ENCODE measurements at regions of chr1 and their contacts with region 1.

Region 1: GRCh38 chr1:47527658-47528255 is 89.9 kb downstream of the FOXD2 start:
- DNase-seq: peak; percentile 30 to 56 (median 40)
- ATAC-seq: peak; percentile 89
- H3K4me3 ChIP-seq: no peak overlapping the region
- H3K27ac ChIP-seq: no peak overlapping the region
- H3K4me1 ChIP-seq: no peaks in the 10 kb centered on the region
- H3K27me3 ChIP-seq: peaks cover 5 to 8% of the 10 kb centered on the region in 2 experiments
- CTCF ChIP-seq: peak; percentile 56 to 67 (median 62)
- EP300 ChIP-seq: no peak
- POLR2A ChIP-seq: no peak
- RAD21 ChIP-seq: peak; percentile 17 to 69; a peak in 3 of 4 replicates

Region 2: GRCh38 chr1:47624531-47624930 is 96.8 kb after region 1 on chr1:
- CTCF ChIA-PET with region 1: interaction called, 4 read pairs
- POLR2A ChIA-PET with region 1: no interaction called
- in situ Hi-C with region 1: no loop called
- intact Hi-C with region 1: loop called (anchors 5 kb)
- DNase-seq: peak; percentile 26 to 39 (median 34)
- ATAC-seq: peak; percentile 83
- H3K4me3 ChIP-seq: no peak overlapping the region
- H3K27ac ChIP-seq: no peak overlapping the region
- H3K4me1 ChIP-seq: no peaks in the 10 kb centered on the region
- H3K27me3 ChIP-seq: peaks cover 2 to 20% of the 10 kb centered on the region in 2 experiments; a peak in 3 of 5 replicates
- CTCF ChIP-seq: peak; percentile 51 to 91 (median 70)
- EP300 ChIP-seq: no peak
- POLR2A ChIP-seq: no peak
- RAD21 ChIP-seq: peak in 1 of 2 experiments; percentile 59; a peak in 2 of 4 replicates

Region 3: GRCh38 chr1:47710329-47711071 is 182.7 kb after region 1 on chr1:
- CTCF ChIA-PET with region 1: interaction called, 3 read pairs
- POLR2A ChIA-PET with region 1: interaction called, 3 read pairs
- in situ Hi-C with region 1: no loop called
- intact Hi-C with region 1: loop called (anchors 5 kb)
- DNase-seq: peak; percentile 71 to 97 (median 94)
- ATAC-seq: peak; percentile 96
- H3K4me3 ChIP-seq: no peak overlapping the region
- H3K27ac ChIP-seq: no peak overlapping the region
- H3K4me1 ChIP-seq: peaks cover 0 to 24% of the 10 kb centered on the region in 2 experiments; a peak in 2 of 5 replicates
- H3K27me3 ChIP-seq: peaks cover 30 to 60% of the 10 kb centered on the region in 2 experiments; a peak in 4 of 5 replicates
- CTCF ChIP-seq: peak; percentile 93 to 98 (median 96)
- EP300 ChIP-seq: no peak
- POLR2A ChIP-seq: no peak
- RAD21 ChIP-seq: peak; percentile 87 to 95

Region 4: DNA sequence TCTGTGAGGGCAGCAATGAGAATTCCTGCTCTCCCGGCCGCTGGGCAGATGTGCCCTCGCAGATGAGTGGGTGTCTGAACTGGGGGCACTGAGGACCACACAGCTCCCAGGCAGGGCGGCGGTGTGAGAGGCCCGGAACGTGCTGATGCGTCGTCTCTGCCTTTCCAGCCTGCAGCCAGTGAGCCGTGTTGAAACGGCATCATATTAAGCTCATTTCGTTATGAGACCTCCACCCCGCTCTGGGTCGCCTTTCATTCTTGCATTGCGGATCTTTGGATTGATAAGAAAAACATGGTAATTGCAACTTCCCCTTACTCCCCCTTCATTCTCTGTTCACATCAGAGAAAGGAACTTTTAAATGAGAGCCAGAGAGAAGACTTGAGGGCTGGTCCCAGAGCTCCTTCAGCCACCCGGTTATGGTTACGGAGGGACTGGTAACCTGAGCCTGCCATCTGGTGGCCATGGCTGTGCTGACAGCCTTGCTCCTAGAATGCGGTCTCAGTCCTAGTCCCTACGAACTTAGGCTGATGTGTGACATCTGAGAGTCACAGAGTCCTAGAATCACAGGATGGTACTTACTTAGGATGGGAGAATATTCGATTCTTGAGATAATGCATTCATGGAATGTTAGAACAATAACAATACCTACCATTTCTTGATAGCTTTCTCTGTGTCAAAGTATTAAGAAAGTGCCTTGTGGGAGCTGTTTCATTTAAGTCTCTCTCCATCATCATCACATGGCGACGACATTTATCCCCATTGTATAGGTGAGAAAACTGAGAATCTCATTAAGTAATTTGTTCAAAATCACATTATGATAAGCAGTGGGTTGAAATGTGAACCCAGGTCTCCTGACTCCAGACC is 198.5 kb after region 1 on chr1:
- CTCF ChIA-PET with region 1: interaction called, 5 read pairs
- POLR2A ChIA-PET with region 1: no interaction called
- in situ Hi-C with region 1: no loop called
- intact Hi-C with region 1: loop called (anchors 1 kb)
- DNase-seq: peak; percentile 80 to 86 (median 80)
- ATAC-seq: peak; percentile 98
- H3K4me3 ChIP-seq: no peak overlapping the region
- H3K27ac ChIP-seq: no peak overlapping the region
- H3K4me1 ChIP-seq: peaks cover 0 to 10% of the 10 kb centered on the region in 2 experiments; a peak in 1 of 5 replicates
- H3K27me3 ChIP-seq: peaks cover 15 to 59% of the 10 kb centered on the region in 2 experiments
- CTCF ChIP-seq: peak; percentile 87 to 96 (median 93)
- EP300 ChIP-seq: no peak
- POLR2A ChIP-seq: no peak
- RAD21 ChIP-seq: peak; percentile 69 to 91